GM13977 (cell line): ENCODE measurements at regions of chr17 and their contacts with region 1.

Region 1: DNA sequence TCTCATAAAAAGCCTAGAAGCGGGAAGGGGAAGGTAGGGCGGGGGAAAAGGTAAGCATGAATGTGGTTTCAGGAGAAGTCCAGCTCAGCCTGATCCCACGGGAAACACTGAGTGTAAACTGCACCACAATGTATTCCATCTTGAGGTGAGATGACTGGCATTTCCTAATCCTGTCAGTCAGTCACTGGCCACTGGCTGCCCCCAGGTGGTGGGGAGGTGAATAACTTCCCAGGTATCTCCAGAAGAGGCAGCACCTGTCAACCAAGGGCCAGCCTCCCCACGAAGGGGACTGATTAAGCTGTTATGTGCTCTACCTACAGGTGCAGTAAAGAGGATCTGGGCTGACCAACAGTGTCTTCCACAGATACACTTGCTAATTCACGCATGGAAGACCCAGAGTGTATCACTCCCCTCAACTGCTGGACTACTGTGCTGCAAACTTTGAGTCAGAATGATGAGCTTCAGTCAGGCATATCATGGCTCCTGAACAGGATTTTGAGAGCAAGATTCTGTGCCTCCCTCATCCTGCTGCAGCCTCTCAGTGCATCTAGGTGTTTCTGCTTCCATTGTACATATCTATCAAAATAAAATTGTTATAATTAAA is 108.5 kb upstream of the CCL2 start:
- DNase-seq: peak; percentile 59
- CTCF ChIP-seq: peak; percentile 78

Region 2: DNA sequence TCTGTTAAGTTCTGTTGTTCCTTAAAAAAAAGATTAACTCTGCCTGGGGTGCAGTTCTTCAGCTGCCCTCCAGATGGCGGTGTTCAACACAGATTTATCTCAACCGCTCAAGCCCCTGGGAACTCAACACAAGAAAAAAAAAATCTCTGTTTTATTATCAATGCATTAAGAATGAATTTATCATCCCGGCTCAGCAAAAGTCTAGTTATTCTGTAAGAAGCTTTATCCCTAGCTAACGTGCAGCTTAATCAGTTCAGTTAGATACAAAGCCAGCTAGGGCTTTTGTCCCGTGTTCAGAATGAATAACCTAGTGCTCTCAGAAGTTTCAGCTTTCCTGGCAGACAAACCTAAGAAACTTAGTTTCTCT is 367.3 kb before region 1 on chr17:
- in situ Hi-C with region 1: loop called (anchors 25 kb)
- DNase-seq: peak; percentile 55
- CTCF ChIP-seq: peak; percentile 91

Region 3: DNA sequence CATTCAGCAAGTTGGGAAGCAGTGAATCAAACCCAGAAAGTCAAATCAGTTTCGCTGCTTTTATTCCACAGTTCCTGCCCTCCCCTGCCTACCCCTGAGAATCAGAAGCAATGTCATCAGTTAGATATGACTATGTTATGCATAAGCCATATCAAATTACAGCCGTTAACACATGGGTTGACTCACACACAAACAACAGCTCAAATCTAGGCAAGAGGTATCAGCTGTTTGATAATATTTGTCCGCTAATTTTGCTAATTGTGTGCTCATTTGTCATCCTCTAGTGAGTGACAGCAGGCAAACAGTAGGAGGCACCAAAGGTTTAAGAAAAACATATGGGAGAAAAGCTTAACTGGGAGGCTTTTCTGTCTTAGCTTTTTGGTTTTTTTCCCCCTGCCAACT is 218.8 kb before region 1 on chr17:
- in situ Hi-C with region 1: loop called (anchors 25 kb)
- DNase-seq: peak; percentile 26
- CTCF ChIP-seq: peak; percentile 47

Region 4: GRCh38 chr17:34024806-34025551 is 121.6 kb before region 1 on chr17:
- in situ Hi-C with region 1: no loop called
- DNase-seq: no peak
- CTCF ChIP-seq: no peak

Region 5: GRCh38 chr17:34235389-34236028 is 89.0 kb after region 1 on chr17:
- in situ Hi-C with region 1: no loop called
- DNase-seq: no peak
- CTCF ChIP-seq: no peak

Region 6: GRCh38 chr17:34337701-34338100 is 191.2 kb after region 1 on chr17:
- in situ Hi-C with region 1: no loop called
- DNase-seq: no peak
- CTCF ChIP-seq: no peak